ENCODE measurements at regions of chr2 and their contacts with region 1.

Region 1: GRCh38 chr2:950080-950966 is at the start of gene SNTG2:
- DNase-seq: peak; percentile 47
- H3K4me3 Mint-ChIP-seq: peak within 1 kb of the TSS; percentile 79
- H3K27ac Mint-ChIP-seq: no peak within 1 kb of the TSS
- H3K4me1 Mint-ChIP-seq: peaks cover 21% of the 10 kb centered on the region
- H3K27me3 Mint-ChIP-seq: peaks cover 45% of the 10 kb centered on the region
- total RNA-seq, gene SNTG2: not detected in 2 replicates

Region 2: DNA sequence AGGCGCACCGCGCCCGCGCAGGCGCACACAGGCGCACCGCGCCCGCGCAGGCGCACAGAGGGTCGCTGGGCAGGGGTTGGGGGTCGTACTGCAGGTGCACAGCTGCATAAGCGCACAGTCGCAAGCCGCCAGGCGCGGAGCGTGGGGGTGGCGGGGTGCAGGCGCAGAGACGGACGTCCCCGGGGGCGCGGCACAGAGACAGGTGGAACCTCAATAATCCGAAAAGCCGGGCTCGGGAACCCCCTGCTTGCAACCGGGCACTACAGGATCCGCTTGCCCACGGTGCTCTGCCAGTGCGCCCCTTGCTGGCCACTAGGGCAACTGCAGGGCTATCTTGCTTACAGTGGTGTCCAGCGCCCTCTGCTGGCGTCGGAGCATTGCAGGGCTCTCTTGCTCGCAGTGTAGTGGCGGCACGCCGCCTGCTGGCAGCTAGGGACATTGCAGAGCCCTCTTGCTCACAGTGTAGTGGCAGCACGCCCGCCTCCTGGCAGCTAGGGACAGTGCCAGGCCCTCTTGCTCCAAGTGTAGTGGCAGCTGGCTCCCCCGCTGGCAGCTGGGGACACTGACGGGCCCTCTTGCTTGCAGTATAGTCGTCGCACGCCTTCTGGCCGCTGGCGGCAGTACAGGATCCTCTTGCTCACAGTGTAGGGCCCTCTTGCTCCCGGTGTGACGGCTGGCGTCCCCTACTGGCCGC is 938.9 kb before region 1 on chr2:
- intact Hi-C with region 1: no loop called
- DNase-seq: peak; percentile 36
- H3K4me3 Mint-ChIP-seq: no peak overlapping the region
- H3K27ac Mint-ChIP-seq: no peak overlapping the region
- H3K4me1 Mint-ChIP-seq: peaks cover 28% of the 10 kb centered on the region
- H3K27me3 Mint-ChIP-seq: peaks cover 2% of the 10 kb centered on the region

Region 3: GRCh38 chr2:677056-677965 is 273.0 kb before region 1 on chr2 and contains the start of gene TMEM18:
- intact Hi-C with region 1: loop called (anchors 5 kb)
- DNase-seq: peak; percentile 88
- H3K4me3 Mint-ChIP-seq: peak within 1 kb of the TSS; percentile 94
- H3K27ac Mint-ChIP-seq: peak within 1 kb of the TSS; percentile 97
- H3K4me1 Mint-ChIP-seq: peaks cover 42% of the 10 kb centered on the region
- H3K27me3 Mint-ChIP-seq: peaks cover 2% of the 10 kb centered on the region
- total RNA-seq, gene TMEM18: 23.3 and 24.9 TPM in 2 replicates

Region 4: DNA sequence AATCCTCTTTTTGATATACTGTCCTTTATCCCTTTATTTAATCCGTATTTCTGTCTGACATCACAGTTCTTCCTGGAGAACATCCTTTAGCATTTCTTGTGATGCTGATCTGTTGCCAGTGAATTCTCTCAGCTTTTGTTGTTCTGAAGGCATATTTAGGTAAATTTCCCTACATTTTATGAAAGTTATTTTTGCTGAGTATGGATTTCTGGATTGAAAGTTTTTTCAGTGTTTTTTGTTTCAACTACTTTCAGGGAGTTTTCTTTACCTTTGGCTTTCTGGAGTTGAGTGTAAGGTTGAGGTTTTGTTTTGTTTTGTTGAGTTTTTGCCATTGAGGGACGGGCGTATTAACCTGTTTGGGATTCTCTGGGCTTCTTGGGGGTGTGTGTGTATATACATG is 22.8 kb after region 1 on chr2:
- intact Hi-C with region 1: loop called (anchors 1 kb)
- DNase-seq: no peak
- H3K4me3 Mint-ChIP-seq: no peak overlapping the region
- H3K27ac Mint-ChIP-seq: no peak overlapping the region
- H3K4me1 Mint-ChIP-seq: peaks cover 23% of the 10 kb centered on the region
- H3K27me3 Mint-ChIP-seq: peaks cover 12% of the 10 kb centered on the region

Measured in activated T-helper 1 cell treated with anti-CD3 and anti-CD28 coated beads, Interleukin-12 subunit alpha, Interleukin-12 subunit beta, Interleukin-2, Interleukin-4 antibody, amounts not matched to agents 30 ng/mL and 10 ng/mL and 1 ng/mL, durations not matched to agents 14 hours and 24 hours and 36 hours (primary cell).